KBM-7 (cell line): ENCODE measurements at regions of chr14 and their contacts with region 1.

Region 1: DNA sequence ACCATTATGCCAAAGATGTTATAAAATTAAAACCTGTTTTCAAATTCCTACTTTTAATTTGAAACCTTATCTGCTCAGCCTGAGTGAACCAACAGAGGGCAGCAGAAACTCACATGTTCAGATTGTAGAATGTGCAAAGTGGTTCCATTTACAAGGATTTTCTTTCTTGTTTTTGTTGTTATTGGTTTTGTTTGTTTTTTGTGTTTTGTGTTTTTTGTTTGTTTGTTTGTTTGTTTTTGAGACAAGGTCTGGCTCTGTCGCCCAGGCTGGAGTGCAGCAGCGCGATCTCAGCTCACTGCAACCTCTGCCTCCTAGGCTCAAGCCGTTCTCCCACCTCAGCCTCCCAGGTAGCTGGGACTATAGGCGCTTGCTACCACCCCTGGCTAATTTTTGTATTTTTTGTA is 22.8 kb upstream of the GARIN2 start:
- DNase-seq: peak; percentile 39

Region 2: GRCh38 chr14:67285876-67286452 is 119.5 kb after region 1 on chr14:
- in situ Hi-C with region 1: loop called (anchors 25 kb)
- DNase-seq: peak; percentile 47

Region 3: DNA sequence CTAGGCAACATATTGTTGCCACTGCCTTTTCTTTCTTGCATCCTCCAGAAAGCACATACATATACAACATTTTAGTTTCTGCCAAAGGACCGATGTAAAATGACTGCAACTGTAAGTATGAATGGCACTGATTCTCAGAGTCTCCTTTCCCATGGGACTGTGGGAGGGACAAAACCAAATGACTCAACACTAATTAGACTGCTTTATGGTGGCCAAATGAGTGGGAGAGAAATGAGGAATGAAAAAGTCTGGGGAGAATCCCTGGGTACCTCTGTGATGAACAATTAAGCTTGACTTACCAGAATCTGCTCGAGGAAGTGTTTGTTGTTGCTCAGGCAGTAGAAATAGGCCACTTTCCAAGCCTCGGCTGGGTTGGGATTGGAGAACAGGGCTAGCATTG is 639.8 kb after region 1 on chr14:
- in situ Hi-C with region 1: no loop called
- DNase-seq: no peak